Activated CD4-positive, alpha-beta T cell treated with anti-CD3 and anti-CD28 coated beads for 36 hours (primary cell): ENCODE measurements at regions of chr4 and their contacts with region 1.

Region 1: GRCh38 chr4:22500831-22501719 is 14.8 kb downstream of the ADGRA3 start:
- DNase-seq: peak; percentile 66
- ATAC-seq: peak; percentile 97
- H3K4me3 Mint-ChIP-seq: peak overlapping the region; percentile 12
- H3K27ac Mint-ChIP-seq: no peak overlapping the region
- H3K4me1 Mint-ChIP-seq: peaks cover 29% of the 10 kb centered on the region
- H3K27me3 Mint-ChIP-seq: no peaks in the 10 kb centered on the region

Region 2: GRCh38 chr4:22480675-22481327 is 20.3 kb before region 1 on chr4:
- CTCF ChIA-PET with region 1: no interaction called
- POLR2A ChIA-PET with region 1: interaction called, 15 read pairs
- intact Hi-C with region 1: no loop called
- DNase-seq: no peak
- ATAC-seq: no peak
- H3K4me3 Mint-ChIP-seq: no peak overlapping the region
- H3K27ac Mint-ChIP-seq: no peak overlapping the region
- H3K4me1 Mint-ChIP-seq: peaks cover 29% of the 10 kb centered on the region
- H3K27me3 Mint-ChIP-seq: no peaks in the 10 kb centered on the region

Region 3: GRCh38 chr4:22670956-22671355 is 169.9 kb after region 1 on chr4:
- CTCF ChIA-PET with region 1: no interaction called
- POLR2A ChIA-PET with region 1: no interaction called
- intact Hi-C with region 1: loop called in 1 of 2 experiments (anchors 5 kb)
- DNase-seq: peak; percentile 16
- ATAC-seq: peak; percentile 94
- H3K4me3 Mint-ChIP-seq: no peak overlapping the region
- H3K27ac Mint-ChIP-seq: peak overlapping the region; percentile 38
- H3K4me1 Mint-ChIP-seq: peaks cover 51% of the 10 kb centered on the region
- H3K27me3 Mint-ChIP-seq: no peaks in the 10 kb centered on the region